Naive thymus-derived CD8-positive, alpha-beta T cell (primary cell): ENCODE measurements at regions of chr1 and their contacts with region 1.

Region 1: DNA sequence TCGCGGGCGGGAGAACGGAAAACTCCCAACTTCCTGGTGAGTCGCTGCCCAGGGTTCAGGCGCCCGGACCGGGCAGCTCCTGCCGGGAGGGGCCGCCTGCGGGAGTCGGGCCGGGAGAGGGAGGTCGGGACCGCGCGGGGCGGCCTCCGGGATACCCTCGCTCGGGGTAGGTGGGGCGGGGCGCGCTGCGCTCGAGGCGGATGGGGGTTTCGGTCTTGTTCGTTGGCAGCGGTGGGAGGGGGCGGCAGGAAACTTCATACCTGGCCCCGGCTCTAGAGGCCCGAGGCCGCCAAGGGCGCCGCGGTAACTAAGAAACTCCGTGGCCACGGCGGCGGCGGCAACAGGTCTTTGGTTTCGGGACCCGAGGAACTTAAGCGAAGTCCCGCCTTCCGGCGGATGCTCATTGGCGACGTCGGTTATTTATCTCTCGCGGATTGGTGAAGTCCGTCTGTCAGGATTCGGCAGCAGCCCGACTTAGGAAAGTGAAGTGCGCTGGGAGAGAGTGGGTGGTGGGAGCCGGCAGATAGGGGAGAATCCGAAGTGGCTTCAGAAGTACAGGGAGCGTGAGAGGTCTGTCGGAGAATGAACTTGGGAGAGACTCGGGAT is 546 bp downstream of the NEK7 start:
- DNase-seq: peak; percentile 63 to 87 (median 78)
- ATAC-seq: peak; percentile 55 to 56
- H3K4me3 Mint-ChIP-seq: peak overlapping the region; percentile 94 to 100 (median 100)
- H3K27ac Mint-ChIP-seq: peak overlapping the region; percentile 96 to 100 (median 99)
- H3K4me1 Mint-ChIP-seq: peaks cover 19 to 58% (median 38%) of the 10 kb centered on the region in 4 donors
- H3K27me3 Mint-ChIP-seq: no peaks in the 10 kb centered on the region

Region 2: GRCh38 chr1:198167436-198167934 is 10.1 kb after region 1 on chr1:
- POLR2A ChIA-PET with region 1: interaction called, 54 read pairs
- DNase-seq: peak in 5 of 10 donors; percentile 21 to 61 (median 56)
- ATAC-seq: peak; percentile 55 to 58
- H3K4me3 Mint-ChIP-seq: peak overlapping the region; percentile 17 to 84 (median 75)
- H3K27ac Mint-ChIP-seq: peak overlapping the region; percentile 78 to 100 (median 92)
- H3K4me1 Mint-ChIP-seq: peaks cover 52 to 93% (median 89%) of the 10 kb centered on the region in 4 donors
- H3K27me3 Mint-ChIP-seq: no peaks in the 10 kb centered on the region

Region 3: DNA sequence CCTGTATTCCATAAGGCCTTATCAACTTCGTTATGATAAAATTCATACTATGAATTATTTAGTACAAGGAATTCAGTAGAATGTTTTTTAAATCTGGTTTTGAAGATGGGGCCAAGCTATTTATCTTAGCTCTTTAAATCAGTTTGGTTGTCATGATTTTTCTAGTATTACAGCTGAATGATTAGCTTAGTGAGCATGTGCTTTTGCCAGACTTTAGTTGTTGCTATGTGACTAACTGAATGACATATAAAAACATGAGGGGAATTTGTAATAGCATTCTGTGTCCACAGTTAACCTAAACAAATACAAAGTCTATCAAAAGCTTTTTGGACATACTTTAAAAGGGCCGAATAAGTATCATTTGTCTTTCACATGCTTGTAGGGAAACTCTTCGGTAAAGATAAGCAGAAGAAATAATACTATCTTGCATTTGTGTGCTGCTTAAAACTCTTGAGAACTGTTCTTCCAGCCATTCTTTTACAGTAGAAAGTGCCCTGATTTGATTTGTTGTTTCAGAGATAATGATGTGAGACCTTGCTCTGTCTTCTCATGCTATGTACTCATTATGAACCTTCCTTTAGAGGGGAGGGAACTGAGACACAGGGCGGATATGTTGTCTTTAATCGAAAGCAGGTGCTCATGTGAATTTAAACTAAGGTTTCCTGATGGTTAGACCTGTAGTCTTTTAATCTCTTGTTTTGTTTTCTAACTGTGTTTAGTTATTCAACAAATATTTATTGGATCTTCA is 18.3 kb after region 1 on chr1:
- POLR2A ChIA-PET with region 1: interaction called, 54 read pairs
- DNase-seq: peak in 4 of 10 donors; percentile 28 to 55 (median 39)
- ATAC-seq: peak; percentile 72 to 77
- H3K4me3 Mint-ChIP-seq: peak overlapping the region; percentile 10 to 77 (median 61)
- H3K27ac Mint-ChIP-seq: peak overlapping the region; percentile 84 to 99 (median 92)
- H3K4me1 Mint-ChIP-seq: peaks cover 43 to 95% (median 86%) of the 10 kb centered on the region in 4 donors
- H3K27me3 Mint-ChIP-seq: no peaks in the 10 kb centered on the region